CD4-positive, alpha-beta T cell (primary cell): ENCODE measurements at regions of chr4 and their contacts with region 1.

Region 1: GRCh38 chr4:186191200-186192065 is at the start of gene CYP4V2:
- DNase-seq: peak; percentile 72 to 94 (median 84)
- ATAC-seq: peak; percentile 74
- H3K4me3 ChIP-seq: peak within 1 kb of the TSS; percentile 86
- H3K4me3 Mint-ChIP-seq: peak within 1 kb of the TSS; percentile 96
- H3K27ac ChIP-seq: peak within 1 kb of the TSS; percentile 83 to 88
- H3K27ac Mint-ChIP-seq: peak within 1 kb of the TSS; percentile 97
- H3K4me1 ChIP-seq: peaks cover 24% of the 10 kb centered on the region
- H3K4me1 Mint-ChIP-seq: peaks cover 62% of the 10 kb centered on the region
- H3K27me3 ChIP-seq: no peaks in the 10 kb centered on the region
- H3K27me3 Mint-ChIP-seq: no peaks in the 10 kb centered on the region
- CTCF ChIP-seq: peak; percentile 27
- total RNA-seq, gene CYP4V2: 12.7 to 12.8 TPM

Region 2: GRCh38 chr4:185395956-185396723 is 795.3 kb before region 1 on chr4:
- CTCF ChIA-PET with region 1: no interaction called
- POLR2A ChIA-PET with region 1: interaction called, 11 read pairs
- intact Hi-C with region 1: loop called in 1 of 2 experiments (anchors 10 kb)
- DNase-seq: peak; percentile 88 to 98 (median 96)
- ATAC-seq: peak; percentile 91
- H3K4me3 ChIP-seq: peak overlapping the region; percentile 88
- H3K4me3 Mint-ChIP-seq: peak overlapping the region; percentile 92
- H3K27ac ChIP-seq: peak overlapping the region; percentile 93 to 97
- H3K27ac Mint-ChIP-seq: peak overlapping the region; percentile 92
- H3K4me1 ChIP-seq: peaks cover 11% of the 10 kb centered on the region
- H3K4me1 Mint-ChIP-seq: peaks cover 17% of the 10 kb centered on the region
- H3K27me3 ChIP-seq: no peaks in the 10 kb centered on the region
- H3K27me3 Mint-ChIP-seq: no peaks in the 10 kb centered on the region
- CTCF ChIP-seq: no peak

Region 3: DNA sequence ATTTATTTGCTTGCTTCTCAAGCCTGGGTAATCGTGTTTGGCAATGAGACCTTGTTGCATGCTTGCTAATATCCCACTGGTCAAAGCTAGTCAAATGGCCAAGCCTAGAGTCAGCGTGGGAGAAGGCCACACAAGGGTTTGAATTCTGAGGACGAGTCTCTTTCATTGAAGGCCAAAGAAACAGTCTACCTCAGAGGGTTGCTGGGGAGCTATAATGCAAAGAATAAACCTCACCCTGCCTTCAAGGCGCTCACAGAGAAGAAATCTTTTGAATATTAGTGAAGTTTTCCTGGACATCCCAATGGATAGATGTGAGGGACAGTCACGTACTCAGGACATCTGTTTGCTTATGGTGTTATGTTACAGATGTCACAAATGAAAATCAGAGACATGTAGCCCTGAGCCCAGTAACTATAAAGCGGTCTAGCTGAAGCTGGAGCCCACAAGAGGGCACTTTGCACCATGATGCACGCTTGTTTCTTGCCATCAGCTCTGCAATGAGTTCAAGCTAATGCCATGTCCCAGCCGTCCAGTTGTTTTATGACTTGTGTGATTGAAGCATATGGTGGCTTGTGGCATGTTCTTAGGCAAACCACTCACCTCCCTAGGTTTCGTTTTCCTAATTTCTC is 123.6 kb before region 1 on chr4:
- CTCF ChIA-PET with region 1: no interaction called
- POLR2A ChIA-PET with region 1: interaction called, 15 read pairs
- intact Hi-C with region 1: no loop called
- DNase-seq: peak in 12 of 14 experiments; percentile 5 to 67 (median 32)
- ATAC-seq: peak; percentile 58
- H3K4me3 ChIP-seq: peak overlapping the region; percentile 62
- H3K4me3 Mint-ChIP-seq: peak overlapping the region; percentile 55
- H3K27ac ChIP-seq: no peak overlapping the region
- H3K27ac Mint-ChIP-seq: no peak overlapping the region
- H3K4me1 ChIP-seq: peaks cover 10% of the 10 kb centered on the region
- H3K4me1 Mint-ChIP-seq: peaks cover 24% of the 10 kb centered on the region
- H3K27me3 ChIP-seq: peaks cover 0 to 9% of the 10 kb centered on the region in 2 experiments
- H3K27me3 Mint-ChIP-seq: peaks cover 16% of the 10 kb centered on the region
- CTCF ChIP-seq: peak; percentile 26

Region 4: DNA sequence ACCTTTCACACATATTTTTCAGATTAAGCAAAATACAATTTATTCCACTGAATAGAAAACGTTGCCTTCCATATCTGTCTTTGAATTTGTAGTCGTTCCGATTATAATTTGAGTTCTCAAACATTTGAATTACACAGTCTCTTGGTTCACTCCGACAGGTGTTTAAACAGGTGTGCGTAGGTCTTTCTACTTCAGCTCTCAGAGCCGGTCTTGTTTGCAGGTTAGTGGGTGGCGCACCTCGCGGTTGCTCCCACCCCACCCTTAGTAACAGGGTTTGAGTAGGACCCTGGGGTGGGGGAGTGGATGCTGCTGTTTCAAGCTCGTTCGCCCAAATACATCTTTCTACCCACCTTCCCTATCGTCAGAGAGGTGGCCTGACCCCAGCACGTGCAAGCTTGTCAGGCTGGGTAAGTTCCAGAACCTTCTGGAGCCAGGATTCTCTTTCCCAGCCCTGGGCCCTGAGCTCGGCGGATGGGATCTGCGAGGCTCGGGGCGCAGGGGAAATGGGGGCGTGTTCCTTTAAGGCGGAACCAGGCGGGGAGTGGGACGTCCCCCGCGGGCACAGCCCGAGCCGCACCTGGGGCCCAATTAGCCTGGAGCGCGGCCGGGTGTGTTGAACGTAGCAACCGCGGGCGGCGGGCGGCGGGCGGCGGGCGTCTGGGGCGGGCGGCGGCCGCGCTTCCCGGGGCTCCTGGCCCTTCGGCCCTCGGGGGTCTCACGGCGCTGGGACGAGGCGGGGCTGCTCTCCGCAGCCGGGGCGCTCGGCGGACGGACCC is 87.1 kb before region 1 on chr4 and contains the start of gene FAM149A:
- CTCF ChIA-PET with region 1: no interaction called
- POLR2A ChIA-PET with region 1: interaction called, 18 read pairs
- intact Hi-C with region 1: no loop called
- DNase-seq: peak in 13 of 14 experiments; percentile 11 to 69 (median 31)
- ATAC-seq: peak; percentile 87
- H3K4me3 ChIP-seq: peak within 1 kb of the TSS; percentile 36
- H3K4me3 Mint-ChIP-seq: peak within 1 kb of the TSS; percentile 89
- H3K27ac ChIP-seq: no peak within 1 kb of the TSS
- H3K27ac Mint-ChIP-seq: no peak within 1 kb of the TSS
- H3K4me1 ChIP-seq: peaks cover 13% of the 10 kb centered on the region
- H3K4me1 Mint-ChIP-seq: peaks cover 13% of the 10 kb centered on the region
- H3K27me3 ChIP-seq: peaks cover 17 to 40% of the 10 kb centered on the region in 2 experiments
- H3K27me3 Mint-ChIP-seq: peaks cover 72% of the 10 kb centered on the region
- CTCF ChIP-seq: no peak
- total RNA-seq, gene FAM149A: 0.61 to 1.1 TPM

Region 5: DNA sequence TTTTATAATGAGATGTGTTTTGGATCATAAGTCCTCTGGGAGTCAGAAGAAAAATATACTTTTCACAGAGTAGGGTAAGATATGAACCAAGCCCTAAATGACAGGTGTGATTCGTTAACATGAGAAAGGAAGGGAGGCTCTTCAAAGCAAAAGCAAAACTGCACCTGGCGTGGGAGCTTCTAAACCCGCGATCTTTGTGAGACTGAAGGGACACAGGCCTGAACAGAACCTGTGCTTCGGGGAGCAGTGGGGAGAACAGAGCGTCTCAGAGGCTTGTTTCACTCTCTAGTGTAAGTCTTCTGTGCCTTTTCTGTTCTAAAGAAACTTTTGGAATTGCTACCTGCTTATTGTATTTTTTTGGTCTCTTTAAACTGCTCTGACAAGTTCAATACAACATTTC is 30.3 kb before region 1 on chr4:
- CTCF ChIA-PET with region 1: no interaction called
- POLR2A ChIA-PET with region 1: interaction called, 11 read pairs
- intact Hi-C with region 1: no loop called
- DNase-seq: peak in 4 of 14 experiments; percentile 15 to 39 (median 28)
- ATAC-seq: peak; percentile 51
- H3K4me3 ChIP-seq: no peak overlapping the region
- H3K4me3 Mint-ChIP-seq: peak overlapping the region; percentile 46
- H3K27ac ChIP-seq: no peak overlapping the region
- H3K27ac Mint-ChIP-seq: no peak overlapping the region
- H3K4me1 ChIP-seq: peaks cover 6% of the 10 kb centered on the region
- H3K4me1 Mint-ChIP-seq: no peaks in the 10 kb centered on the region
- H3K27me3 ChIP-seq: peaks cover 0 to 2% of the 10 kb centered on the region in 2 experiments
- H3K27me3 Mint-ChIP-seq: no peaks in the 10 kb centered on the region
- CTCF ChIP-seq: no peak

Region 6: DNA sequence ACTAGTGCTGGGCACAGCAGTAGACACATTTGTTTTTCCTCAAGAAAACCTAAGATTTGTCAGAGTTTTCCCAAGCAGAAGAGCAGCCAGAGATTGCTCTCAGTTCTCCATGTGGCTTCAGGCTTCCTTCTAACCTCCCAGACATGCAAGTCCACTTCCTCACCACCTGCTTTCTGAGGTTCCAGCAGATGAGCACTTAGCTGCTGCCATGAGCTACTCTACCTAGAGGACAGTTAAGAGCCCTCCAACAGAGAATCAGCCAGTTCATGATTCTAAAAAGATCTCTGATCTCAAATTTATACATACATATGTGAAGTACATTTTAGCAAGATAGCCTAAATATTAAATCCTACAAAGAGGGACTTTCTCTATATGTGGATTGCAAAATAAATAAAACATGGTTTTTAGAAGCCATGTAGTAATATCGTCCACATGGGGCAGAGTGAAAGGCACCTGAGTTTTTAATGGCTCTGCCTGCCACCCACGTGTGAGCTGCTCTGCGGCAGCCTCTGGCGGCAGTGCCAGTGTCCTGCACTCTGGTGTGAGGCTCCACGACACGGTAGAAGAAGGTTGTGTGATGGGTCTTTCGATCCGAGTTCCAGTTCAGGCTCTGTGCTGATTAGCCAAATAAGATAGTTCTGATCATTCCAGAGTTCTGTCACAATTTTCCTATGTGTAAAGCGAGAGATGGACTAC is 10.2 kb after region 1 on chr4:
- CTCF ChIA-PET with region 1: interaction called, 32 read pairs
- POLR2A ChIA-PET with region 1: interaction called, 35 read pairs
- intact Hi-C with region 1: no loop called
- DNase-seq: peak; percentile 23 to 85 (median 50)
- ATAC-seq: peak; percentile 85
- H3K4me3 ChIP-seq: no peak overlapping the region
- H3K4me3 Mint-ChIP-seq: peak overlapping the region; percentile 57
- H3K27ac ChIP-seq: no peak overlapping the region
- H3K27ac Mint-ChIP-seq: peak overlapping the region; percentile 16
- H3K4me1 ChIP-seq: peaks cover 16% of the 10 kb centered on the region
- H3K4me1 Mint-ChIP-seq: peaks cover 34% of the 10 kb centered on the region
- H3K27me3 ChIP-seq: no peaks in the 10 kb centered on the region
- H3K27me3 Mint-ChIP-seq: no peaks in the 10 kb centered on the region
- CTCF ChIP-seq: peak; percentile 81

Region 7: DNA sequence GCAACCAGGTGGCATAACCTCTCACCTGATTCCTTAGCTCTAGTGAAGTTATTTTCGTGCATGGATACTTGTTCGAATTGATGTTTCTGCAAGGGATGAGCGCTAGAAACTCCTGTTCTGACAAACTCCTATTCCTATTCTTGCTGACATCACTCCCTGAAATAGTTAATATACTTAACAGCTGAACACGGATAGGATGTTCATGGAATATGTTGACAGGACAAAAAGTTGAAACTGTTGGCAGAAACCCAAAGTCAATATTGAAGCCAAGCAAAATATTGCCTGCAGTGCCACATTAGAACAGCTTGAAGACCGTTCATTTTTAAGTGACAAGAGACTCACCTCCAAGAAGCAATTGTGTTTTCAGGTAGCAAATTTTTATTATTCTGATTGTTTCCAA is 35.8 kb after region 1 on chr4 and contains the start of gene KLKB1:
- CTCF ChIA-PET with region 1: no interaction called
- POLR2A ChIA-PET with region 1: no interaction called
- intact Hi-C with region 1: no loop called
- DNase-seq: no peak
- ATAC-seq: no peak
- H3K4me3 ChIP-seq: no peak within 1 kb of the TSS
- H3K4me3 Mint-ChIP-seq: no peak within 1 kb of the TSS
- H3K27ac ChIP-seq: no peak within 1 kb of the TSS
- H3K27ac Mint-ChIP-seq: no peak within 1 kb of the TSS
- H3K4me1 ChIP-seq: no peaks in the 10 kb centered on the region
- H3K4me1 Mint-ChIP-seq: no peaks in the 10 kb centered on the region
- H3K27me3 ChIP-seq: peaks cover 0 to 4% of the 10 kb centered on the region in 2 experiments
- H3K27me3 Mint-ChIP-seq: no peaks in the 10 kb centered on the region
- CTCF ChIP-seq: no peak
- total RNA-seq, gene KLKB1: 1.2 TPM